Right cardiac atrium (tissue), 5 donors: ENCODE measurements at regions of chr5 and their contacts with region 1.

Region 1: DNA sequence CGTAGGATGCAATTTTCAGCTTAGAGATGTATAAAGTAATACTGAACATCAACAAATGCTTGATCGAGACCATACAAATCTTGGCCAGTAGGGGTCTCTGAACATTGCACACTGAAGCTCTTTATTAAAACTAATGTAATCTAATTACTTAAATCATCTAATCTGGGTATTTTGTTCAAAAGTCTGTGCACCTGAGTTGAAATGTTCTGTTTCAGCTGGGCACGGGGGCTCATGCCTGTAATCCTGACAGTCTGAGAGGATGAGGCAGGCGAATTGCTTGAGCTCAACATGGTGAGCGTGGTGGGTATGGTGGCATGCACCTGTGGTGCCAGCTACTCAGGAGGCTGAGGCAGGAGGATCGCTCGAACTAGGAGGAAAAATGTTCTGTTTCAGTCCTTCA is 41.0 kb downstream of the ESM1 start:
- DNase-seq: no peak
- ATAC-seq: no peak
- H3K4me3 ChIP-seq: no peak overlapping the region
- H3K27ac ChIP-seq: no peak overlapping the region
- H3K4me1 ChIP-seq: no peaks in the 10 kb centered on the region
- H3K27me3 ChIP-seq: no peaks in the 10 kb centered on the region

Region 2: DNA sequence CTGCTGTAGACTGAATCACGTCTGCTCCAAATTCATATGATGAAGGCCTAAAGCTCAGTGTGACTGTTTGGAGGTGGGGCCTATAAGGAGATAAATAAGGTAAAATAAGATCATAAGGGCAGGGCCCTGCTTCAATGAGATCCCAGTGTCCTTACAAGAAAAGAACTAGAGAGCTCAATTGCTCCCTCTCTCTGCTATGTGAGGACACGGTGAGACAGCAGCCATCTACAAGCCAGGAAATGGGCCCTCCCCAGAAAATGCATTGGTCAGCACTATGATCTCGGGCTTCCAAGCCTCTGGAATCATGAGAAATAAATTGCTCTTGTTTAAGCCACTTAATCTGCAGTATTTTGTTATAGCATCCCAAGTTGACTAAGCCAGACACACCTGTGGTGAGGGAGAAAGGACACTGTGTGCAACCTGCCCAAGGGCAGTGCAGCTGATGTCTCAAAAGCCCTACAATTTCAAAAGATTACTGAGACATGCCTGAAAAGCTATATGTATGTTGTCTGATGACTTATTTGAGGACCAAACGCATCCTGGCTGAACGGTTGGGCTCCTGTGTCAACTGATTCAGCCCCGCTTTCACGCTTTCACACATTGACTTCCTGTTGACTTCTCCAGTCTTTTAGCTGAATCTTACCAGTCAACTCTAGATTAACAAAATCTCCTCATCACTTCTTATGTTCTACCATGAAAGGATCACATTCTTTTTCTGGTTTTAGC is 92.8 kb after region 1 on chr5:
- intact Hi-C with region 1: no loop called
- DNase-seq: no peak
- ATAC-seq: no peak
- H3K4me3 ChIP-seq: no peak overlapping the region
- H3K27ac ChIP-seq: no peak overlapping the region
- H3K4me1 ChIP-seq: no peaks in the 10 kb centered on the region
- H3K27me3 ChIP-seq: no peaks in the 10 kb centered on the region

Region 3: GRCh38 chr5:55151923-55152842 is 207.8 kb after region 1 on chr5:
- intact Hi-C with region 1: loop called in 1 of 4 experiments (anchors 5 kb)
- DNase-seq: no peak
- ATAC-seq: no peak
- H3K4me3 ChIP-seq: no peak overlapping the region
- H3K27ac ChIP-seq: no peak overlapping the region
- H3K4me1 ChIP-seq: no peaks in the 10 kb centered on the region
- H3K27me3 ChIP-seq: no peaks in the 10 kb centered on the region